RWPE1 (cell line): ENCODE measurements at regions of chr3 and their contacts with region 1.

Region 1: GRCh38 chr3:184298759-184299496 is at the start of gene PSMD2:
- DNase-seq: peak; percentile 97
- H3K27ac ChIP-seq: peak within 1 kb of the TSS; percentile 80
- CTCF ChIP-seq: no peak

Region 2: DNA sequence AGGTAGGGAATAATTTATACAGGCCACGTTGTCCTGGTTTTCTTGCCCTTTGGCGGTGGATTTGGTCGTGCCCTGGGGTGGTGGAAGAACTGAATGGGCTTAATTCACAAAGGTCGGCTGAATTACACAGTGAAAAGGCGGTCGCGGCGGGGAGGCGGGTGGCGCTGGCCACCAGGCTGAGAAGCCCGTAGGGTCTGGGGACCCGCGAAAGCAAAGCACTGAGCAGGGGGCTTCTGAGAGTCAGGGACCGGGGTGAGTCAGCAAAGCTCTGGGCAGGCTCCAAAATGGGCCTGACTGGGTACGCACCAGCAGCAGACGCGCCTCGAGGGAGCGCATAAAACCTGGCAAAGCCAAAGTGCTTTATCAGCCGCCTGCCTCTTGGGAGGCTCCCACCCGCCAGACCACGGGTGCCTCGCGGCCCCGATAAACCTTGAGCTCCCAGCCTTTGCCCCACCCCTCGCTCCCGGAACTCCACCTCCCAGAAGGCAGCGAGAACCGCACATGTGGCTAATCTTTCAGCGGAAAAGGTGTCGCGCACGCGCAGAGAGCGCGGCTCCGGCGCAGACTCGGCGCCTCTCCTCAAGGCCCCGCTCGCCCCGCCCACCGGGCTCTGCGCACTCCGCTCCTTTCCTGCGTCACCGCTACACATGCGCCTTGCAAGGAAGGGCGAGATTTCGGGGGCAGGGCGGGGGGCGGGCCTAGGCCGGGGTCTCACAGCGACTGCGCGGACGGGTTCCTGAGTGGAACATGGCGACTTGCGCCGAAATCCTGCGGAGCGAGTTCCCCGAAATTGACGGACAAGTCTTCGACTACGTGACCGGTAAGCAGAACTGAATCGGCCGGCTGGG is 113.2 kb before region 1 on chr3 and contains the start of gene ABCF3:
- CTCF ChIA-PET with region 1: no interaction called
- POLR2A ChIA-PET with region 1: no interaction called
- DNase-seq: peak; percentile 97
- H3K27ac ChIP-seq: peak within 1 kb of the TSS; percentile 93
- CTCF ChIP-seq: no peak

Region 3: GRCh38 chr3:184335661-184336546 is 37.0 kb after region 1 on chr3:
- CTCF ChIA-PET with region 1: no interaction called
- POLR2A ChIA-PET with region 1: interaction called, 10 read pairs
- DNase-seq: peak; percentile 76
- H3K27ac ChIP-seq: peak overlapping the region; percentile 94
- CTCF ChIP-seq: no peak

Region 4: GRCh38 chr3:184395320-184395660 is 96.4 kb after region 1 on chr3:
- CTCF ChIA-PET with region 1: no interaction called
- POLR2A ChIA-PET with region 1: no interaction called
- DNase-seq: no peak
- H3K27ac ChIP-seq: no peak overlapping the region
- CTCF ChIP-seq: no peak